ENCODE measurements at regions of chr9 and their contacts with region 1.

Region 1: DNA sequence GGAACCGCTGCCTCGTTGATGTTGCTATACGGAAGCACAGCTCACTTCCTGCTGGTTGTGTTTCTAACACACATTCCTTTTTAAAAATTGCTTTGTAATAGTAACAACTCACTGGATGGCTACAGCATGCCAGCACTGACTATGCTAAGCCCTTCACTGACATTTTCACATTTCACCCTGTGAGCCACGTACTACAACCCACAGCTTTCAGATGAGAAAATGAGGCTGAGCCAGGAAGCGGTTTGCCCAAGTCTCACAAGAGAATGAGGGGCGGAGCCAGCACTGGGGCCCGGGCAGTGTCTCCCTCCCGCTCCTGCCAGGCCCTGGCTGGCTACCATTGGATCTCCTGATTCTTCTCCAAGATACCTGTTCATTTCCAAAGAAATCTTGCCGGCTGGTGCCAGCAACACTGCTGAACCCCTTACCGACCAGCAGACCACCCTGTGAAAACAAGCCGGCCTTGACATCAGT is 38.3 kb downstream of the FAM78A start:
- DNase-seq: peak; percentile 76
- ATAC-seq: peak; percentile 99
- H3K4me3 ChIP-seq: peak overlapping the region; percentile 26; the same call in 1 of the 2 replicates
- H3K27ac ChIP-seq: peak overlapping the region; percentile 86
- H3K4me1 ChIP-seq: peaks cover 17% of the 10 kb centered on the region
- H3K27me3 ChIP-seq: no peaks in the 10 kb centered on the region
- CTCF ChIP-seq: no peak
- EP300 ChIP-seq: no peak
- POLR2A ChIP-seq: peak; percentile 86
- RAD21 ChIP-seq: 0 out of 2 replicates have a peak, but pooled peaks have one; percentile 7

Region 2: DNA sequence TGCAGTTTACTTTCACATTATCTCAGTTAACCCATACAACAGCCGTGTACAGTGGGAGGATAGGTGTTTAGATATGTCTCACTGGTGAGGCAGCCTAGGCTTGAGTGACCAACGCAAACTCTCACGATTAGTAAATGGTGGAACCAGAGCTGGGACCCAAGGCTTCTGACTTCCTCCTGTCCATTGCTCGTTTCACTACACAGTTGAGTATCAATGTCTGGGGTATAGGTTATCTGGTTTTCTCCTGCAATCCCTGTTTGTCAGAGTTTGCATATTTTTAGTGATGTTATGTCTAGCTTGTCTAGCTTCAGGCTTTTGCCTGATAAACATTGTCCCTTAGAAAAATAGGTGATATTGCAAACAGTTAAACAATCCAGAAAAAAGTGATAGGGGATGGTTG is 50.0 kb before region 1 on chr9:
- CTCF ChIA-PET with region 1: no interaction called
- POLR2A ChIA-PET with region 1: no interaction called
- RAD21 ChIA-PET with region 1: no interaction called
- SMC1A ChIA-PET with region 1: no interaction called
- in situ Hi-C with region 1: no loop called
- intact Hi-C with region 1: no loop called
- DNase-seq: no peak
- ATAC-seq: peak; percentile 35; the same call in 2 of the 3 replicates
- H3K4me3 ChIP-seq: no peak overlapping the region
- H3K27ac ChIP-seq: no peak overlapping the region
- H3K4me1 ChIP-seq: no peaks in the 10 kb centered on the region
- H3K27me3 ChIP-seq: no peaks in the 10 kb centered on the region
- CTCF ChIP-seq: no peak
- EP300 ChIP-seq: no peak
- POLR2A ChIP-seq: no peak
- RAD21 ChIP-seq: no peak

Region 3: DNA sequence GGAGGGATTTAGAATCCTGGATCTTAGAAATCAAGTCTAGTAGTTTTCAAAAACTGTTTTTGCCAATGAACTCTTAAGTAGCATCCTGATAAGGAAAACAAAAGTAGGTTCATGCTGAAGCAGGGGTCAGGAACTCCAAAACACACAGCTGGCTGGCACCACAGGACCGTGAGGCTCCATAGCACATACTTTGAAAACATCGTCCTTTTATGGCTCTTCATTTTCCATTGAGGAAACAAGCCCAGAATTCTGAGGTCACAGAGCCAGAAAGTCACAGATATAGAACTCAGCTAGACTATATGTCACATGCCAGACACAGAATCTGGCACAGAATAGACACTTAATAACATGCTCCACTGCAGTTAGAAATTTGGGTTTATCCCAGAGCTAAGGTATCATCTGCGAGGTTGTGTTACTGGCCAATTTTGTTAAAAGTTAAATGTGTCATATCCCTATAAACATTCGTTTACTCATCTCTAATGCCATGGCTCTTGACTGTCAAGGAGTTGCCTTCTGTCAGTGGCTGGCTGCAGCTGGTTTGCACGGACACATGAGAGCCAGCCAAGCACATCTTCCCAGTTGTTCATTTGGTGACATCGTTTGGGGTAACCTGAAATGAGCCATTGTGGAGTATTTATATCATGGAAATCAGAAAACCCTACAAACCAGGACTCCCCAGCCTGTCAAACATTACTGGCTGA is 20.5 kb before region 1 on chr9:
- CTCF ChIA-PET with region 1: no interaction called
- POLR2A ChIA-PET with region 1: no interaction called
- RAD21 ChIA-PET with region 1: no interaction called
- SMC1A ChIA-PET with region 1: no interaction called
- in situ Hi-C with region 1: no loop called
- intact Hi-C with region 1: no loop called
- DNase-seq: no peak
- ATAC-seq: no peak
- H3K4me3 ChIP-seq: no peak overlapping the region
- H3K27ac ChIP-seq: no peak overlapping the region
- H3K4me1 ChIP-seq: no peaks in the 10 kb centered on the region
- H3K27me3 ChIP-seq: no peaks in the 10 kb centered on the region
- CTCF ChIP-seq: no peak
- EP300 ChIP-seq: no peak
- POLR2A ChIP-seq: no peak
- RAD21 ChIP-seq: no peak

Region 4: DNA sequence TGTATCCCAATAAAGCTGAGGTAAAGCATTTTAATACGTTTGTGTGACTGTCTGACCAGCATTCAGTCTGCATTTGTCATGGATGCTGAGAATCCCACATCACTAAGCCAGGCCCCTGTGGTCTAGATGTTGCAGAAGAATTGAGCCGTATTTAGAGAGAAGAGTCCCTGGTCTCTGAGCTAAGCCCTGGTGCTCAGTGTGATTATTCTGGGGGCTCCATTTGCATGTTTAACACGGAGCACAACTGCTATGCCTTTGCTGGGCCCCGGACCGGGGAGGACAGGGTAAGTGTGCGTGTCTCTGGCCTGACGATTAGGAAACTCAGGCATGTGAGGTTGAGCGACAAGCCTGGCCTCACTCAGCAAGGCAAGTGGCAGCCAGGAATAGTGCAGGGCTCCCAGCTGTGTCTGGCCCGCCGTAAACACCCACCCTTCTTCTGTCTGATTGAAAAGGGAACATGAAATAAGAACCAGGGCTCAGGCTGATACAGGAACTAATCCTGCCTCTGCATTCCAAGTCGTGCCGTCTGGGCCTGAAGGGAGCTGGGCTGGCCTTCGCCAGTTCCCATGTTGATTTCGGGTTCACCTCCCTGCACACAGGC is 16.0 kb after region 1 on chr9:
- CTCF ChIA-PET with region 1: interaction called, 8 read pairs
- POLR2A ChIA-PET with region 1: interaction called, 12 read pairs
- RAD21 ChIA-PET with region 1: interaction called, 10 read pairs
- SMC1A ChIA-PET with region 1: interaction called, 9 read pairs
- in situ Hi-C with region 1: no loop called
- intact Hi-C with region 1: loop called (anchors 2 kb)
- DNase-seq: no peak
- ATAC-seq: peak; percentile 4
- H3K4me3 ChIP-seq: no peak overlapping the region
- H3K27ac ChIP-seq: peak overlapping the region; percentile 78
- H3K4me1 ChIP-seq: peaks cover 48% of the 10 kb centered on the region
- H3K27me3 ChIP-seq: no peaks in the 10 kb centered on the region
- CTCF ChIP-seq: no peak
- EP300 ChIP-seq: no peak
- POLR2A ChIP-seq: peak; percentile 65
- RAD21 ChIP-seq: no peak